Activated CD4-positive, alpha-beta T cell treated with anti-CD3 and anti-CD28 coated beads, Interleukin-2, amount 10 ng/mL, durations not matched to agents 7 days and 5 days (primary cell): ENCODE measurements at regions of chr5 and their contacts with region 1.

Region 1: DNA sequence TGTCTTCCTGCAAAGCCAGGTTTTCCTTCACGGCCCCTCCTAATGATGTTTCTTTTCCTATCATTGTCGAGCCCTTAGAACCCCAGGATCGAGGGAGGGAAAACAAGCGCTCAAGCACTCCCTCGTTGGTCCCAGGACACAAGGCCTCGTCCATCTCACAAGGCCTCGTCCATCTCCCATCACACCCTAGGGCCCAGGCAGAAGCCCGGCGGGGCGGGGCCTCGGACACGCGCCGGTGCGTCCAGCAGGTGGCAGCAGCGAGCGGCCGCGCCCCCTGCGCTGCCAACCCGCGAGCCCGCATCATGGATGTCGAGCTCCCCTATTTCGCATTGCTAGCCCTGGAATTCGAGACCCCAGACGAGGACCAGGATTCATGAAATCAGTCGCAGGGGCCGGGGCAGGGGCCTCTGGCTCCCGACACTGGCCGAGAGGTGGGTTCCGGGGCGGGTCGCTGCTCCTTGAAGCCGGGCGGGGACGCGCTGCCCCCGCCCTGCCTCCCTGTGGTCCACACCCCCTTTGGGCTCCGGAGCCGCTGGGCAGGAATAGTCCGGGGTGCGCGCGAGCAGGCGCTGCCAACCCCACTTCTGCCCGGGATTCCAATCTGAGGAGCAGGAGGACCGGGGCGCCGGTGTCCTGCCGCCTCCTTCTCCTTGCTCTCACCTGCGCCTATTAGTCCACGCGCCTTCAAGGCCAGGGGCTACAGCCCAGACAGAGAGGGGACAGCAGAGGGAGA is at the start of gene ABLIM3:
- DNase-seq: peak; percentile 58
- H3K4me3 Mint-ChIP-seq: peak within 1 kb of the TSS; percentile 37
- H3K27ac Mint-ChIP-seq: no peak within 1 kb of the TSS
- H3K4me1 Mint-ChIP-seq: no peaks in the 10 kb centered on the region
- H3K27me3 Mint-ChIP-seq: peaks cover 24% of the 10 kb centered on the region
- total RNA-seq, gene ABLIM3: not detected

Region 2: DNA sequence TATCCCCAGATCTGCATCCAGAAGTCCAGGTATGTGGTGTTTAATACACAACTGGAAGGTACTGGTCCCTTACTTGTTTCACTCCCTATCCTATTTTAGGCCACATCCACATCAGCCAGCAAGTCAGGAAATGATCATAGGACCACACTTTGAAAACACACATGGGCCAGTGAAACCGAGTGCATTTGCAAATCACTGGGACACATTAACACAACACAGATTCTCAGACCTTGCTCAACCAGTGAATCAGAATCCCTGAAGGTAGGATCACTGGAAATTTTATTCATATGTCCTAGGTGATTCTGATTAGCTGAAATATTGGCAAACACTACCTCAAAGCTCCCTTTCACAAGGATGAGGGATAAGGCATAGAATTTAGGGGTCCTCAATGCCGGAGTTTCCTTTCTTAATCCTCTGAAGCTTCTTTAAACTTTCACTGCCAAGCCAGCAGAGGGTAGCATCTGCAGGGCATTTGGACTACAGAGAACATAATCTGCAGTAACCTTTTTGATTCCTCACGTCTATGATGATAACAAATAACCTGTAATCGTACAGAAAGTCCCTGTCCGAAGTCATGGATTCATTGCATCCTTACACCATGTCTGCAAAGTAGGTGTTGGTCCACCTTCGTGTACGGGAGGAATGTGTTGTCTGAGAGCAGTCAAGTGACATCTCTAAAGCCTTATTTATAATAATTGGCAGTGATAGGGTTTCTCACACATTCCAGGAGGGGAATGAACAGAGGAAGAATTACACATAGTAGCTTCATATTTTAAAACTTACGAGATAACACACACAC is 11.1 kb before region 1 on chr5:
- CTCF ChIA-PET with region 1: interaction called, 10 read pairs
- POLR2A ChIA-PET with region 1: no interaction called
- DNase-seq: no peak
- H3K4me3 Mint-ChIP-seq: no peak overlapping the region
- H3K27ac Mint-ChIP-seq: no peak overlapping the region
- H3K4me1 Mint-ChIP-seq: no peaks in the 10 kb centered on the region
- H3K27me3 Mint-ChIP-seq: peaks cover 13% of the 10 kb centered on the region